ENCODE measurements at regions of chr13 and their contacts with region 1.

Region 1: GRCh38 chr13:113816946-113817859 is 46.7 kb downstream of the GAS6 start:
- DNase-seq: peak; percentile 89

Region 2: GRCh38 chr13:113837554-113838355 is 20.6 kb after region 1 on chr13:
- intact Hi-C with region 1: loop called (anchors 1 kb)
- DNase-seq: peak; percentile 94

Region 3: GRCh38 chr13:113863436-113864272 is 46.5 kb after region 1 on chr13 and contains the start of gene GAS6:
- intact Hi-C with region 1: loop called (anchors 1 kb)
- DNase-seq: peak; percentile 78
- total RNA-seq, gene GAS6: 201 TPM

Region 4: GRCh38 chr13:113904411-113904810 is 87.2 kb after region 1 on chr13:
- intact Hi-C with region 1: loop called (anchors 2 kb)
- DNase-seq: peak; percentile 77

Region 5: GRCh38 chr13:113951246-113951999 is 134.2 kb after region 1 on chr13:
- intact Hi-C with region 1: loop called (anchors 5 kb)
- DNase-seq: peak; percentile 92